ENCODE measurements at regions of chr2 and their contacts with region 1.

Region 1: GRCh38 chr2:35410431-35411061 is 945.0 kb upstream of the CRIM1 start:
- H3K4me3 ChIP-seq: no peak overlapping the region
- H3K27ac ChIP-seq: no peak overlapping the region
- H3K4me1 ChIP-seq: no peaks in the 10 kb centered on the region
- CTCF ChIP-seq: 0 out of 2 replicates have a peak, but pooled peaks have one; percentile 15

Region 2: GRCh38 chr2:33673937-33674336 is 1736.6 kb before region 1 on chr2:
- CTCF ChIA-PET with region 1: interaction called, 14 read pairs
- POLR2A ChIA-PET with region 1: no interaction called
- H3K4me3 ChIP-seq: no peak overlapping the region
- H3K27ac ChIP-seq: no peak overlapping the region
- H3K4me1 ChIP-seq: no peaks in the 10 kb centered on the region
- CTCF ChIP-seq: peak; percentile 23; the same call in 1 of the 2 replicates

Measured in HEK293 (cell line).